Right cardiac atrium (tissue), 5 donors: ENCODE measurements at regions of chr9 and their contacts with region 1.

Region 1: DNA sequence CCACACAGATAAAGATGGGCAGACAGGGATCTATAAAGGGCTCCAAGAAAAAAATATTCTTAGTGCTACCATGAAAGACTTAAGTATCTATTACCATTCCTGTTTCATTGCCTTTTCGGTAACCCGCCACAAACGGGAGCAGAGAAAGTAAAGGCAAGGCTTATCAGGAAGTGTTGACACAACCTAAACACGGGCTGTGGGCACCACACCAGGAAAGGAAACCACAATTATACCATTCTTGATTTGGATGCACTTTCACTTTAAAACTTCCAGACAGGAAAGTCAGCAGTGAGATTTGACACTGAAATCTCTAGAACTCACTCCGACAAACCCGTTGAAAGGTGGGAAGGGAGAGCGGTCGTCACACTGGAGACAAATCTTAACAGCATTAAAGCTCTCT is 6.5 kb downstream of the TLE1 start:
- DNase-seq: no peak
- ATAC-seq: no peak
- H3K4me3 ChIP-seq: no peak overlapping the region
- H3K27ac ChIP-seq: no peak overlapping the region
- H3K4me1 ChIP-seq: peaks cover 4% of the 10 kb centered on the region
- H3K27me3 ChIP-seq: no peaks in the 10 kb centered on the region

Region 2: DNA sequence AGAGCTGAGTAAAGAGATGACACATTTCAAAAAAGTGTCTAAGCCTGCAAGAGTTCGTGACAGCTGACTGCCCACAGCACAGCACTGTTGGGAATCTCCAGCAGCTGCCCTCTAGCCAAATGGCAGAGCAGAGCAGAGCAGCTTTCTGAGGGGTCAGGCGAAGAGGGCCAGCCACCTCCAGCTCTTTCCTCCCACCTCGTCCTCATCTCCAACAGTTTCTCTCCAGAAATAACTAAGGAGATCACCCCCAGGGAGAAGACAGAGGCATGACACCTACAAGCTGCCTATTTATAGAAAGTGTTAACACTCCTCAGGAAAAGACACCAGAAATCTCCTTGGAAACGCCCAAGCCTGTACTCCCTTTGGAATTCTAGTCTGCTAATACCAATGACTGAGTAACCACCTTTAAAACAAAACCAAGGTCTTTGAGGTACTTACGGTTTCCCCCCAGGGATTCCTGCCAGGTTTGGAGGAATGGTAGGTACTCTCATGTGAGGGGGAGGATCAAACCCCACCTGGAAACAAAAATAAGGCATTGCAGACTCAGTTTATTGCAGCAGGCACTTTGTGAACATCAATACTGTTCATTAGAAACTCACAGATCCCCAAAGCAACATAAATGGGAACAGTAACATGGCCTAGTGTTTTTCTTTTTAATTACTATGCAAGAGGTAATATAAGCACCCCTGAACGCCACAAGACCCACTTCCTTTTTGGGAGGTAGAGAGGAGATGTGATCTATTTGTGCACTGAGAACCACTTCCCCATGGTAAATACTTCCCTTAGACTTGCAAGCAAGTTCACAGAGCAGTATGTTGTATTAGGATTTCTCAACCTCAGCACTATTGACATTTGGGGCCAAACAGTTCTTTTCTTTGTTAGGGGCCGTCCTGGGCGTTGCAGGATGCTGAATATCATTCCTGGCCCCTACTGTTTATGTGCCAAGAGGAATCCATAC is 72.7 kb before region 1 on chr9:
- intact Hi-C with region 1: loop called in 2 of 4 experiments (anchors 5 to 10 kb)
- DNase-seq: no peak
- ATAC-seq: no peak
- H3K4me3 ChIP-seq: no peak overlapping the region
- H3K27ac ChIP-seq: no peak overlapping the region
- H3K4me1 ChIP-seq: peaks cover 4% of the 10 kb centered on the region
- H3K27me3 ChIP-seq: no peaks in the 10 kb centered on the region